ENCODE measurements at regions of chr13 and their contacts with region 1.

Region 1: GRCh38 chr13:35157143-35157755 is 215.2 kb downstream of the NBEA start:
- DNase-seq: peak; percentile 31
- ATAC-seq: peak; percentile 46; the same call in 2 of the 3 replicates
- H3K4me3 ChIP-seq: no peak overlapping the region
- H3K27ac ChIP-seq: no peak overlapping the region
- H3K4me1 ChIP-seq: no peaks in the 10 kb centered on the region
- H3K27me3 ChIP-seq: no peaks in the 10 kb centered on the region
- CTCF ChIP-seq: peak; percentile 73
- EP300 ChIP-seq: no peak
- POLR2A ChIP-seq: no peak
- RAD21 ChIP-seq: peak; percentile 55; the same call in 1 of the 2 replicates

Region 2: DNA sequence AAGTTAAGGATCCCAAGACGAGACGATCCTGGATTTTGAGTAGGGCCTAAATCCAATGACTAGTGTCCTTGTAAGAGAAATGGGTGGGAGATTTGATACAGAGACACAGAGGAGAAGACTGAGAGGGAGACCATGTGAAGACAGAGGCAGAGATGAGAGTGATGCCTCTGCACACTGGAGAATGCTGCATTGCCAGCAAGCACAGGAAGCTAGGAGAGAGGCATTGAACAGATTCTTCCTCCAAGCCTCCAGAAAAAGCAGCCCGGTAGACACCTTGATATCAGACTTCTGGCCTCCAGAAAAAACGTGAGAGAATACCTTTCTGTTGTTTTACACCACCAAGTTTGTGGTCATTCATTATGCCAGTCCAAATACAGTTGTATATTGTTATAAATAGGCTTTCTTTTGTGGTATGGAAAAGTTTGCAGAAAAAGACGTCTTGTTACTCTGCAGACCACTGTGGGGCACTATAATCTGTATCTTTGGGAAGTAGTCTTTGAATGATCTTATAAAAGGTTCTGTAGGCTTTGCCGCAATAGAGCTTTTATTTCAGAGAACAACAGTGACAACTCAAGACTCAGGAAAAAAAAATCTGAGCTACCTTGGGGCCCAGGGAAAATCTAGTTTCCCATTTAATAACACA is 1357.2 kb before region 1 on chr13:
- CTCF ChIA-PET with region 1: no interaction called
- POLR2A ChIA-PET with region 1: no interaction called
- in situ Hi-C with region 1: loop called (anchors 25 kb)
- intact Hi-C with region 1: no loop called
- DNase-seq: peak; percentile 38
- ATAC-seq: peak; percentile 79
- H3K4me3 ChIP-seq: no peak overlapping the region
- H3K27ac ChIP-seq: no peak overlapping the region
- H3K4me1 ChIP-seq: peaks cover 13% of the 10 kb centered on the region; the same call in 1 of the 2 replicates
- H3K27me3 ChIP-seq: no peaks in the 10 kb centered on the region
- CTCF ChIP-seq: peak; percentile 64
- EP300 ChIP-seq: no peak
- POLR2A ChIP-seq: no peak
- RAD21 ChIP-seq: no peak

Region 3: DNA sequence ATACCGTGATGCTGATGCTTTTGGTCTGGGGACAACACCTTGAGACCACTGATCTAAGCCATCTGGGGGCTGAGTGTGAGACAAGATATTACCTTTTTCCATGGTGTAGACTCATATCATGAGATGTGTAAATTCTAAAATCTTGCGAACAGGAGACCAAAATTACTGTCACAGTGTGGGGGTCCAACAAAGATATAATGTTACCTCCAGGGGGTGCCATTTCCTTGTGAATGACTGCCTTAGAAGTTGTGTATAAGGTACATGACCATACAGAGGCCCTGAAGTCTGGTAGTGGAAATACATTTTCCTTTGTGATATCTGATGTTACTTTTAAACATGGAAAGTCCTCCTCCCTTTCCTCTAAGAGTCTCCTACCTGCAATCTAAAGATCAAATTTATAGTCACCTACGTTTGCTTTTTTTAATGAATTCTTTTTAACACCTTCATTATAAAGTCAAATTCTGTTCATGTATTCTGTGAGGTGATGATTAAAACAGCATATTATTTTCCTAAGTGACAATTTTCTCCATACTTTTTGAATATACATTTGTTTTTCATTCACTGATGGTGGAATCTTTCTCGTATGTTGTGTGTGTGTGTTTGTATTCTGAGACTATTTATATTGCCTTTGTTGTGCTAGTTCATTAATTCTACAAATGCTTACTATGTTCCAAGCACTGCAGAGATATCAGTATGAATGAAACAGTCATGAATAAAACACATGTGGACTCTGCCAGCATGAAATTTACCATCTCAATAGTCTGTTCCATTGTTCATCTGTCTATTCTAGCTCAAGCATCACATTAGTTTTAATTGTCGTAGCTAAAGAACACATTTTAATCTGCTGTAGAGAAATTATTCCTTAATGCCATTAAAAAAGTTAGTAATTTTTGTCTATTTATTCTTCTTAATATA is 1225.6 kb before region 1 on chr13:
- CTCF ChIA-PET with region 1: interaction called, 3 read pairs
- POLR2A ChIA-PET with region 1: no interaction called
- in situ Hi-C with region 1: loop called (anchors 25 kb)
- intact Hi-C with region 1: loop called (anchors 2 kb)
- DNase-seq: peak; percentile 65
- ATAC-seq: peak; percentile 96
- H3K4me3 ChIP-seq: no peak overlapping the region
- H3K27ac ChIP-seq: no peak overlapping the region
- H3K4me1 ChIP-seq: peaks cover 4% of the 10 kb centered on the region
- H3K27me3 ChIP-seq: no peaks in the 10 kb centered on the region
- CTCF ChIP-seq: peak; percentile 64
- EP300 ChIP-seq: no peak
- POLR2A ChIP-seq: no peak
- RAD21 ChIP-seq: peak; percentile 88

Region 4: GRCh38 chr13:34322014-34322742 is 835.1 kb before region 1 on chr13:
- CTCF ChIA-PET with region 1: no interaction called
- POLR2A ChIA-PET with region 1: no interaction called
- in situ Hi-C with region 1: no loop called
- intact Hi-C with region 1: no loop called
- DNase-seq: no peak
- ATAC-seq: no peak
- H3K4me3 ChIP-seq: no peak overlapping the region
- H3K27ac ChIP-seq: no peak overlapping the region
- H3K4me1 ChIP-seq: no peaks in the 10 kb centered on the region
- H3K27me3 ChIP-seq: no peaks in the 10 kb centered on the region; a peak in 2 of 5 replicates
- CTCF ChIP-seq: no peak
- EP300 ChIP-seq: no peak
- POLR2A ChIP-seq: no peak
- RAD21 ChIP-seq: no peak

Region 5: GRCh38 chr13:34833562-34834182 is 323.6 kb before region 1 on chr13:
- CTCF ChIA-PET with region 1: interaction called, 3 read pairs
- POLR2A ChIA-PET with region 1: no interaction called
- in situ Hi-C with region 1: no loop called
- intact Hi-C with region 1: loop called (anchors 2 kb)
- DNase-seq: no peak
- ATAC-seq: peak; percentile 79
- H3K4me3 ChIP-seq: no peak overlapping the region
- H3K27ac ChIP-seq: no peak overlapping the region
- H3K4me1 ChIP-seq: no peaks in the 10 kb centered on the region
- H3K27me3 ChIP-seq: no peaks in the 10 kb centered on the region
- CTCF ChIP-seq: peak; percentile 23; the same call in 1 of the 2 replicates
- EP300 ChIP-seq: no peak
- POLR2A ChIP-seq: no peak
- RAD21 ChIP-seq: no peak

Region 6: GRCh38 chr13:34941835-34942731 is 215.2 kb before region 1 on chr13 and contains the start of gene NBEA:
- CTCF ChIA-PET with region 1: no interaction called
- POLR2A ChIA-PET with region 1: no interaction called
- in situ Hi-C with region 1: no loop called
- intact Hi-C with region 1: loop called (anchors 2 kb)
- DNase-seq: peak; percentile 19
- ATAC-seq: peak; percentile 82
- H3K4me3 ChIP-seq: peak within 1 kb of the TSS; percentile 81 to 84 (median 83)
- H3K27ac ChIP-seq: no peak within 1 kb of the TSS
- H3K4me1 ChIP-seq: peaks cover 20% of the 10 kb centered on the region
- H3K27me3 ChIP-seq: no peaks in the 10 kb centered on the region; a peak in 2 of 5 replicates
- CTCF ChIP-seq: peak; percentile 33; the same call in 1 of the 2 replicates
- EP300 ChIP-seq: no peak
- POLR2A ChIP-seq: peak in 1 of 2 experiments; percentile 68; a peak in 2 of 4 replicates
- RAD21 ChIP-seq: no peak; the same call in 1 of the 2 replicates
- total RNA-seq, gene NBEA: 2.7 and 5.0 TPM in 2 replicates

Region 7: DNA sequence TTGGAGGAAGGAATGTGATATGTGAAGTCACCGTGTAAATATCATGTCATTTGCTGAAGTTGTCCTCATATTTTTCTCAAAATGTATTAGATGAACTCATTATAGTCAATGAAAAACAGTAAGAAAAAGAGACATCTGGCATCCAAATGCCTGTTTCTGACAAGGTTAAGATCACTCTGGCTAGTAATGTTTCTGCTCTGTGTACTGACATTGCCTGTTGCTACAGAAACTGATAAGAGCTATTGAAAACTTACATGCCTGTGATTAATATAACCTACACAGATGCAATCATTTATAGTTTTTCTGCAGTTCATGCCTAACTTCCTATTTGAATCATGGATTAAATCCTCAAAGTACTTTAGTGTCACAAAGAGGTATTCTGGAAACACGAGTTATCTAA is 34.6 kb after region 1 on chr13:
- CTCF ChIA-PET with region 1: no interaction called
- POLR2A ChIA-PET with region 1: no interaction called
- in situ Hi-C with region 1: no loop called
- intact Hi-C with region 1: no loop called
- DNase-seq: no peak
- ATAC-seq: no peak
- H3K4me3 ChIP-seq: no peak overlapping the region
- H3K27ac ChIP-seq: no peak overlapping the region
- H3K4me1 ChIP-seq: no peaks in the 10 kb centered on the region
- H3K27me3 ChIP-seq: no peaks in the 10 kb centered on the region
- CTCF ChIP-seq: no peak
- EP300 ChIP-seq: no peak
- POLR2A ChIP-seq: no peak
- RAD21 ChIP-seq: no peak

Measured in HepG2 (cell line).